ENCODE measurements at regions of chr2 and their contacts with region 1.

Region 1: DNA sequence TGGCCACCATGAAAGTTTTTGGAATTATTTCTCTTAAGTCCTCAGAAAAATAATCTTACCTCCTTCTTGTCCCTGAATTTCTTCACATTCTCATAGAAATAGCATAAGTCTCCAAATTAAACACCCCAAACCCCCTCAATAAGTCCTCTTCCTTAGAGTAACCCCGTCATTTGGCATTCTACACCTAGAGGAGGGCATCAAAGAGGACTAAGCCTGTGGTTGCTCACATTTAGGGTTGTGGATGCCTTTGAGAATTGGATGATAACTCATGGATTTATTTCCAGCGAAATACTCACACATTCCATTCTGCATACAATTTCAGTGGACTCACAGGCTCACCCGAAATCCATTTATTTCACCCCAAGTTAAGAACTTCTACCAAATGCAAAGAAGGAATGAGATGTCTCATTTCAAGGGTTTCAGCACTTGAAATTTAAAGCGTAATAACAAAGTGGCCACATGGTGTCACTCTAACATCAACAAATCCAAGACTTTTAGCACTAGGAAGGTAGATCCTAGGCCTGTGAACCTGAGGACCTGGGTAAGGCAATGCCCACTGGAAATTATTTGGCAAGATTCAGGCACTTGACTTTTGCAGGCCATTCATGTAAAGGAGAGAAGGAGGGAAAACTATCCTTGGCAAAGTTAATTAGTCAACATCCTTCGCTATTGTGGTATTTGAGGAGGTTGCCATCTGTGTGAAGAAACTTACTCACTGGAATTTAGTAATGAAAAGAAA is 24.6 kb downstream of the DYTN start:
- DNase-seq: peak in 6 of 9 experiments; percentile 6 to 70 (median 30)
- ATAC-seq: no peak
- H3K4me3 ChIP-seq: no peak overlapping the region
- H3K4me3 Mint-ChIP-seq: no peak overlapping the region
- H3K27ac ChIP-seq: no peak overlapping the region
- H3K27ac Mint-ChIP-seq: no peak overlapping the region
- H3K4me1 ChIP-seq: no peaks in the 10 kb centered on the region
- H3K4me1 Mint-ChIP-seq: peaks cover 3% of the 10 kb centered on the region
- H3K27me3 ChIP-seq: no peaks in the 10 kb centered on the region
- H3K27me3 Mint-ChIP-seq: no peaks in the 10 kb centered on the region
- CTCF ChIP-seq: peak; percentile 69

Region 2: GRCh38 chr2:206665251-206665650 is 28.3 kb before region 1 on chr2:
- CTCF ChIA-PET with region 1: no interaction called
- POLR2A ChIA-PET with region 1: no interaction called
- intact Hi-C with region 1: no loop called
- DNase-seq: no peak
- ATAC-seq: no peak
- H3K4me3 ChIP-seq: no peak overlapping the region
- H3K4me3 Mint-ChIP-seq: no peak overlapping the region
- H3K27ac ChIP-seq: no peak overlapping the region
- H3K27ac Mint-ChIP-seq: no peak overlapping the region
- H3K4me1 ChIP-seq: no peaks in the 10 kb centered on the region
- H3K4me1 Mint-ChIP-seq: no peaks in the 10 kb centered on the region
- H3K27me3 ChIP-seq: no peaks in the 10 kb centered on the region
- H3K27me3 Mint-ChIP-seq: peaks cover 12% of the 10 kb centered on the region
- CTCF ChIP-seq: no peak

Region 3: GRCh38 chr2:206783718-206784117 is 90.2 kb after region 1 on chr2:
- CTCF ChIA-PET with region 1: interaction called, 4 read pairs
- POLR2A ChIA-PET with region 1: no interaction called
- intact Hi-C with region 1: loop called (anchors 1 to 2 kb)
- DNase-seq: no peak
- ATAC-seq: peak; percentile 44
- H3K4me3 ChIP-seq: no peak overlapping the region
- H3K4me3 Mint-ChIP-seq: no peak overlapping the region
- H3K27ac ChIP-seq: no peak overlapping the region
- H3K27ac Mint-ChIP-seq: no peak overlapping the region
- H3K4me1 ChIP-seq: no peaks in the 10 kb centered on the region
- H3K4me1 Mint-ChIP-seq: peaks cover 11% of the 10 kb centered on the region
- H3K27me3 ChIP-seq: no peaks in the 10 kb centered on the region
- H3K27me3 Mint-ChIP-seq: no peaks in the 10 kb centered on the region
- CTCF ChIP-seq: no peak

Region 4: GRCh38 chr2:206915121-206915520 is 221.6 kb after region 1 on chr2:
- CTCF ChIA-PET with region 1: no interaction called
- POLR2A ChIA-PET with region 1: no interaction called
- intact Hi-C with region 1: no loop called
- DNase-seq: no peak
- ATAC-seq: no peak
- H3K4me3 ChIP-seq: no peak overlapping the region
- H3K4me3 Mint-ChIP-seq: no peak overlapping the region
- H3K27ac ChIP-seq: no peak overlapping the region
- H3K27ac Mint-ChIP-seq: no peak overlapping the region
- H3K4me1 ChIP-seq: no peaks in the 10 kb centered on the region
- H3K4me1 Mint-ChIP-seq: no peaks in the 10 kb centered on the region
- H3K27me3 ChIP-seq: no peaks in the 10 kb centered on the region
- H3K27me3 Mint-ChIP-seq: peaks cover 2% of the 10 kb centered on the region
- CTCF ChIP-seq: no peak

Region 5: DNA sequence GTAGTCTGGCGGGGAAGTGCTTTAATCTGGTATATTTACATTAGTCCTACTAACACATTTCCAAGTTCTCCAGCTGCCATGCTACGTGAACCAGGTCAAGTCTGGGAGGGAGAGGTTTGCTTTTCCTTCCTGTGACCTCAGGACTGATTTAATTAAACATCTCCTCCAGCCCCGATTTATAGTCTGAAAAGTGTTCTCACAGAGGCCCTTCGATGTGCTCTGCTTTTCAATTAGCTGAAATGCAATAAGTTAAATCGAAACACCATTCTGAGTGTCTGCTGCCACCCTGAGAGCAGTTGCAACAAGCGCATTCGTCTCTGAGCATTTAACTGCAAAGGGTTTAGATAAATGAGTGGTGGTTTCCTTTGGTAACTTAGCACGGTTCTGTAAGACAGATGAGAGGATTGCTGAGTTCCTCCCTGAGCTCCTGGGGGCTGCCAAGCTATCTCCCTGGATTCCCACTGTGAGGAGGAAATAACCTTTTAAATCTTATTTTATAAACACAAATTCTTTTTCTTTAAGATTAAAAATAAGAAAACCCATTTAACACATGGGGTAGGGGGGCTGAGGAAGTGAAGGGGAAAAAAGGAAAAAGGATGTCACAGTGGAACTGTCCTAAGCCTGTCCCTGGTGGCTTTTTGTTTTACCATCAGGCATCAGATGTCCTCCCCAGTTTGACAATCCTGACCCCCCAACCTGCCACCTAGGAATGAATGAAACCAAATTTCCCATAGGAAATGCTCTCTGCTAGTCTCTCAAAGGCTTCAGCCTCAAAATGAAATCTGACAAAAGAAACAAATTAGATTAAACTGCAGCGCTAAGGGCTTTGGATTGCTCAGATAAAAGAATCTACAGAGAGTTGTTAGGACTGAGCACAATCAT is 779.7 kb after region 1 on chr2:
- CTCF ChIA-PET with region 1: interaction called, 6 read pairs
- POLR2A ChIA-PET with region 1: no interaction called
- intact Hi-C with region 1: loop called (anchors 1 kb)
- DNase-seq: peak in 6 of 9 experiments; percentile 9 to 62 (median 37)
- ATAC-seq: peak; percentile 57
- H3K4me3 ChIP-seq: no peak overlapping the region
- H3K4me3 Mint-ChIP-seq: no peak overlapping the region
- H3K27ac ChIP-seq: no peak overlapping the region
- H3K27ac Mint-ChIP-seq: no peak overlapping the region
- H3K4me1 ChIP-seq: no peaks in the 10 kb centered on the region
- H3K4me1 Mint-ChIP-seq: peaks cover 13% of the 10 kb centered on the region
- H3K27me3 ChIP-seq: no peaks in the 10 kb centered on the region
- H3K27me3 Mint-ChIP-seq: no peaks in the 10 kb centered on the region
- CTCF ChIP-seq: peak; percentile 33

Region 6: GRCh38 chr2:208033758-208034502 is 1340.4 kb after region 1 on chr2:
- CTCF ChIA-PET with region 1: no interaction called
- POLR2A ChIA-PET with region 1: no interaction called
- intact Hi-C with region 1: loop called in 1 of 2 experiments (anchors 10 kb)
- DNase-seq: peak in 7 of 9 experiments; percentile 4 to 64 (median 48)
- ATAC-seq: peak; percentile 44
- H3K4me3 ChIP-seq: no peak overlapping the region
- H3K4me3 Mint-ChIP-seq: no peak overlapping the region
- H3K27ac ChIP-seq: no peak overlapping the region
- H3K27ac Mint-ChIP-seq: no peak overlapping the region
- H3K4me1 ChIP-seq: no peaks in the 10 kb centered on the region
- H3K4me1 Mint-ChIP-seq: no peaks in the 10 kb centered on the region
- H3K27me3 ChIP-seq: no peaks in the 10 kb centered on the region
- H3K27me3 Mint-ChIP-seq: no peaks in the 10 kb centered on the region
- CTCF ChIP-seq: peak; percentile 41

Region 7: GRCh38 chr2:208072250-208072892 is 1378.8 kb after region 1 on chr2:
- CTCF ChIA-PET with region 1: interaction called, 5 read pairs
- POLR2A ChIA-PET with region 1: no interaction called
- intact Hi-C with region 1: loop called (anchors 1 kb)
- DNase-seq: peak; percentile 6 to 67 (median 58)
- ATAC-seq: peak; percentile 54
- H3K4me3 ChIP-seq: no peak overlapping the region
- H3K4me3 Mint-ChIP-seq: no peak overlapping the region
- H3K27ac ChIP-seq: no peak overlapping the region
- H3K27ac Mint-ChIP-seq: no peak overlapping the region
- H3K4me1 ChIP-seq: no peaks in the 10 kb centered on the region
- H3K4me1 Mint-ChIP-seq: no peaks in the 10 kb centered on the region
- H3K27me3 ChIP-seq: no peaks in the 10 kb centered on the region
- H3K27me3 Mint-ChIP-seq: peaks cover 6% of the 10 kb centered on the region
- CTCF ChIP-seq: peak; percentile 83

Measured in CD8-positive, alpha-beta T cell (primary cell).